ENCODE measurements at regions of chr3 and their contacts with region 1.

Region 1: GRCh38 chr3:124768812-124769211 is 38.6 kb downstream of the UMPS start:
- DNase-seq: no peak
- H3K4me3 ChIP-seq: no peak overlapping the region
- H3K27ac ChIP-seq: no peak overlapping the region
- H3K4me1 ChIP-seq: peaks cover 2% of the 10 kb centered on the region
- H3K27me3 ChIP-seq: no peaks in the 10 kb centered on the region
- CTCF ChIP-seq: no peak
- EP300 ChIP-seq: no peak
- POLR2A ChIP-seq: no peak

Region 2: GRCh38 chr3:124791639-124792151 is 22.9 kb after region 1 on chr3:
- intact Hi-C with region 1: no loop called
- DNase-seq: peak in 3 of 5 donors; percentile 43 to 48 (median 44)
- H3K4me3 ChIP-seq: no peak overlapping the region
- H3K27ac ChIP-seq: peak overlapping the region in 1 of 2 donors; percentile 21
- H3K4me1 ChIP-seq: peaks cover 8% of the 10 kb centered on the region
- H3K27me3 ChIP-seq: no peaks in the 10 kb centered on the region
- CTCF ChIP-seq: no peak
- EP300 ChIP-seq: no peak
- POLR2A ChIP-seq: no peak

Region 3: GRCh38 chr3:124928333-124929202 is 159.8 kb after region 1 on chr3:
- intact Hi-C with region 1: no loop called
- DNase-seq: peak; percentile 24 to 69 (median 49)
- H3K4me3 ChIP-seq: no peak overlapping the region
- H3K27ac ChIP-seq: no peak overlapping the region
- H3K4me1 ChIP-seq: no peaks in the 10 kb centered on the region
- H3K27me3 ChIP-seq: no peaks in the 10 kb centered on the region
- CTCF ChIP-seq: peak; percentile 16 to 68 (median 53)
- EP300 ChIP-seq: no peak
- POLR2A ChIP-seq: no peak

Region 4: GRCh38 chr3:125443923-125444322 is 675.1 kb after region 1 on chr3:
- intact Hi-C with region 1: loop called in 2 of 4 experiments (anchors 5 to 10 kb)
- DNase-seq: no peak
- H3K4me3 ChIP-seq: no peak overlapping the region
- H3K27ac ChIP-seq: no peak overlapping the region
- H3K4me1 ChIP-seq: no peaks in the 10 kb centered on the region
- H3K27me3 ChIP-seq: no peaks in the 10 kb centered on the region
- CTCF ChIP-seq: no peak
- EP300 ChIP-seq: no peak
- POLR2A ChIP-seq: no peak